ENCODE measurements at regions of chr1 and their contacts with region 1.

Region 1: DNA sequence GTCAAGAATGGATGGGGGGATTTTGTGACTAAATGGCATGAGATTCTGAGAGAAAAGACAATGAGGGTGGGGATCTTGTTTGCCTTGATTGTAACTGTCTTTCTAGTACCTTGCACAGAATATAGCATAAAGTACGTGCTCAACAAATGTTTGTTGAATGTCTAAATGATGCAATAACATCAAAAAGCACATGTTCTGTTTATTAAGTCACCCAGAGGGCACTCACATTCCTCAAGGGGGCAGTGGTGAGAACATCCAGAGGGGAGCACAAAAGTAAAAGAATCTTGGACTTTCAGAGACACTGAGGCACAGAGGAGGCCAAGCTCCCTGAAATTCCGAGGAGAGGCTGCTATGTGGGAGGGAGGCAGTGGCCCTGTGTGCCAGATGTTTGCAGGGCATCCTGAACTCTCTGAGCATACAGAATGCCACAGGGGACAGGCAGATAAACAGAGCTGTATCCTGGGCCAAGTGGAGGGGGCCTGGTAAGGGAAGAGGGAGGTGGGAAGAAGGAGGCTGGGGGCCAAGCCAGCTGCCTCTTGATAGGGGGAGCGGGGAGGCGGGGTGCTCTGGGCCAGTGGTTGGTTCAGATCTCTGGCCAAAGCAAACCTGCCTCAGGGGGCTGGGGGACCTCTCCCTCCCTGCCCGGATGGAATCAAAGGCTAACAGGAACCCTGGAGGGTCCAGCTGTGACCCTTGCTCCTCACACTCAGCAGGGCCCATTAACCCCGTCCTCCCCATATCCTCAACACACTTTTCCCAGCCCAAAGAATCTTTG is 6.5 kb upstream of the ATP1A2 start:
- DNase-seq: no peak
- H3K4me3 ChIP-seq: no peak overlapping the region
- CTCF ChIP-seq: no peak
- POLR2A ChIP-seq: no peak

Region 2: GRCh38 chr1:159829273-159829634 is 279.8 kb before region 1 on chr1:
- intact Hi-C with region 1: no loop called
- DNase-seq: no peak
- H3K4me3 ChIP-seq: no peak overlapping the region
- CTCF ChIP-seq: no peak
- POLR2A ChIP-seq: no peak

Region 3: DNA sequence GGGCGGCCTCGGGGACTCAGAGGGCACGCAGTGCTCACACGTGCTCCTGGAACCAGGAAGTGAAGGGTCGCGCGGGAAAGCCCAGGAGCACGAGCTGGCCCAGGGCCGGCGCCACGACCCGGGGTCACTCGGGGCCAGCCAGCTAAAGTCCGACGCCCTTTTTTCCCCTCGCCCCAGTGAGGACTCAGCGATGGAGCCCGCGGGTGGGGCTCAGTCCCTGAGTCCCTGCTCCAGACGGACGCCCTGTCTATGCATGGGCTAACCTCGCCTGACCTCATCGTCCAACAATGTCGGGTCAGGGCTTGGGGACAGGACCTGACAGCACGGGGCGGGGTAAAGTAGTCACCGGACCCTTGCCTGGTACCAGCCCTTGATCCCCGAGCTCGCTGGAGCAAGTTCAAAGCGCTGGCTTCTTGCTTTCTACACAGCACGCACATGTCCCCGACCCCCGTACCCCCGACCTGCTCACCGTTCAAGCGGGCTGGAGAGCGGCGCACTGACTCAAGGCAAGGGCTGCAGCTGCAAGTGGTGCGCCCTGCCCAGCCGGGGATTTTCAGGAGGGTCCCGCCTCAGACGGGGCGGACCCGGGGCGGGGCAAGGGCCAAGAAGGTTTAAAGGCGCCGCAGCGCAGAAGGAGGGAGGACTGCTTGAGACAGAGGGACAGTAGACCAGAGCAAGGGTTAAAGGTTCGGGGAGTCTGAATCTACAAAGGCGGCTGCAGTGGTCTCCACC is 183.9 kb before region 1 on chr1 and contains the start of gene TAGLN2:
- intact Hi-C with region 1: no loop called
- DNase-seq: peak; percentile 90 to 98
- H3K4me3 ChIP-seq: peak within 1 kb of the TSS; percentile 78
- CTCF ChIP-seq: no peak
- POLR2A ChIP-seq: peak in 1 of 2 donors; percentile 51
- total RNA-seq, gene TAGLN2: 244 to 413 (median 306) TPM

Region 4: GRCh38 chr1:160251687-160252526 is 142.8 kb after region 1 on chr1:
- intact Hi-C with region 1: loop called (anchors 5 kb)
- DNase-seq: peak in 1 of 2 donors; percentile 53
- H3K4me3 ChIP-seq: no peak overlapping the region
- CTCF ChIP-seq: peak in 1 of 3 donors; percentile 35
- POLR2A ChIP-seq: no peak